ENCODE measurements at regions of chr6 and their contacts with region 1.

Region 1: DNA sequence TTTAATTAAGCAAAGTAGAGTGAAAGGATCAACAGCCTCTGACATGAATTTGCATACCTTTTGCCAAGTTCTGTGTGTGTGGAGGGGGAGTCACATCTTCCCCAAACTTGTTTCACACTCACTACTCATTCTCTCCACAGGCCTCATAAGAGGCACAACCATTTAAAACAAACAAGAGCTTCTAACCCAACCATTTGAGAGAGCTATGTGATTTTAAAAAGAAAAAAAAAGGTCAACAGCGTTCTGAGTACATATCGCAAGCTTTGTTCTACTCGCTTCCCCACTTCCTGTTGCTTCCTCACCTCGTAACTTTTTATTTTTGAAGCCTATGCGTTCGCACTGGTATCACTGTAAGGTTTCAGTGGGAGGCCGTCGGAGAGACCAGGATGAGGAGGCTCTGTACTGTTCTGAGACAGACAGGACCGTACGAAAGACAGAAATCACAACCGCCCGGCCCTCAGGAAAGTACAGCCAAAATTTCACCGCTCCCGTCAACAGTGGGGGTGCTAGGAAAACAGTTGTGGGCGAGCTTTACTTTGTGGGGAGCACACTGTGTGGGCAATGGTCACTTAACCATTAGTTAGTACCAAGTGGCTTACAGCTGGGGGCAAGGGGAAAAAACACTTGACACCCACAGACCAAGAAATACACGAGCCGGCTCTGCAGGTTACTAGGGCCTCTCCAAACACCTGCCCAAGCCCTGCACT is 61.3 kb downstream of the TRERF1 start:
- DNase-seq: peak; percentile 60
- H3K4me3 Mint-ChIP-seq: peak overlapping the region; percentile 78
- H3K27ac Mint-ChIP-seq: peak overlapping the region; percentile 99
- H3K4me1 Mint-ChIP-seq: peaks cover 92% of the 10 kb centered on the region
- H3K27me3 Mint-ChIP-seq: no peaks in the 10 kb centered on the region

Region 2: DNA sequence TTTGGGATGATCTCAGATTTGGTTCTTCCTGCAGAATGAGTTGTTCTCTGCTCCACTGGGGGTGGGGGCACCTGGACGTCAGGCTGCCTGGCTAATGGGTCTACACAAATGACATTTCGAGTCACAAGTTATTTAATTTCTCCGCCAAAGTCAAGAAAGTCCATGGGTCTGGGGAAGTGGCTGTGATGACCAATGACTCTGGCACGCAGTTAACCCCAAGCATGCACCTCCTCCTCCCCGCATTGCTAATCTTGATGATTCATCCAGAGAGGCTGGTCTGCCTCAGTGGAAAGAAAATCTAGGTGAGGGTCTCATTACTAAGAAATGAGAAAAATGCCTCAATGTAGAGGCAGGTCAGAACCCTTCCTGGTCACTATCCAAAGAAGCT is 74.4 kb before region 1 on chr6:
- intact Hi-C with region 1: loop called (anchors 2 kb)
- DNase-seq: no peak
- H3K4me3 Mint-ChIP-seq: no peak overlapping the region
- H3K27ac Mint-ChIP-seq: peak overlapping the region; percentile 80
- H3K4me1 Mint-ChIP-seq: peaks cover 72% of the 10 kb centered on the region
- H3K27me3 Mint-ChIP-seq: no peaks in the 10 kb centered on the region

Region 3: GRCh38 chr6:42352856-42353564 is 37.4 kb before region 1 on chr6:
- intact Hi-C with region 1: loop called (anchors 1 kb)
- DNase-seq: no peak
- H3K4me3 Mint-ChIP-seq: no peak overlapping the region
- H3K27ac Mint-ChIP-seq: no peak overlapping the region
- H3K4me1 Mint-ChIP-seq: peaks cover 31% of the 10 kb centered on the region
- H3K27me3 Mint-ChIP-seq: no peaks in the 10 kb centered on the region

Region 4: DNA sequence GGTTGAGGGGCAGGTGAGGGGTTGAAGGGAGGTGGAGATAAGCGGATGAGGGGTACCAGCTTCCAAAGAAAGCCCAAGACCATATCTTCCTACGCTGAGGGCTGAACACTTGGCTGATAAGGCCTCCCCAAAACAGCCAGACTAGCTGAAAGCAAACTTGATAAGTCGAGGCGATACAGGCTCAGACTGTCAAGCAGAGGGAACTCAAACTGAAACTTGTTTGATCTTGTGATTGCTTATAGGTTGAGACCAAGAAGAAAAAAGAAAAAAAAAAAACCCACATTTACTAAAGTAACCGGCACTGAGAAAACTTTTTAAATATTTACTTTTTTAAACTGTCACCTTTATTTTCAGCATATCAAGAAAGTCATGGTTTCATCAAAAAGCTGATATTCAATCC is 12.3 kb before region 1 on chr6:
- intact Hi-C with region 1: loop called (anchors 1 kb)
- DNase-seq: peak; percentile 38
- H3K4me3 Mint-ChIP-seq: peak overlapping the region; percentile 60
- H3K27ac Mint-ChIP-seq: peak overlapping the region; percentile 71
- H3K4me1 Mint-ChIP-seq: peaks cover 64% of the 10 kb centered on the region
- H3K27me3 Mint-ChIP-seq: no peaks in the 10 kb centered on the region

Region 5: DNA sequence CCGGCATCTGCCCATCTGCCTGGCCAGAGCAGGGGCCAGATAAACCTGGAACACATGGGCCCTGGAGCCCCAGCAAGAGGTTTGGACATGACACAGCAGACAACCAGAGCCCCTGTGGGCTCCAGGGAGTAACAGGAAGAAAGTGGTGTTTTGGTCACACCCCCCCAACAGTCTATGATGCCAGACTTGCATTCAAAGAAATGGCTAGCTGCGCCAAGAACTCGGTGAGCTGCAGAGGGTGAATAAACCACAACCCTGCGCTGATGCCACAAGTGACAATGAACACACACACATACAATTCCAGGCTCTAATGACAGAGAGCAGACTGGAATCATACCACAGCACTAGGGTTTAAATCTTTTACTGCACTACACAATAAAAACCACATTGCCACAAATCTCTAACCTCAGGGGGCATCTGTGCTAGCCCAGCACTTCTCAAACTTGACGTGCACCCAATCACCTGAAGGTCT is 27.3 kb after region 1 on chr6:
- intact Hi-C with region 1: loop called (anchors 1 kb)
- DNase-seq: peak; percentile 48
- H3K4me3 Mint-ChIP-seq: peak overlapping the region; percentile 37
- H3K27ac Mint-ChIP-seq: peak overlapping the region; percentile 56
- H3K4me1 Mint-ChIP-seq: peaks cover 83% of the 10 kb centered on the region
- H3K27me3 Mint-ChIP-seq: no peaks in the 10 kb centered on the region

Region 6: GRCh38 chr6:42434237-42434636 is 43.9 kb after region 1 on chr6:
- intact Hi-C with region 1: loop called (anchors 1 kb)
- DNase-seq: no peak
- H3K4me3 Mint-ChIP-seq: no peak overlapping the region
- H3K27ac Mint-ChIP-seq: no peak overlapping the region
- H3K4me1 Mint-ChIP-seq: peaks cover 17% of the 10 kb centered on the region
- H3K27me3 Mint-ChIP-seq: no peaks in the 10 kb centered on the region

Region 7: DNA sequence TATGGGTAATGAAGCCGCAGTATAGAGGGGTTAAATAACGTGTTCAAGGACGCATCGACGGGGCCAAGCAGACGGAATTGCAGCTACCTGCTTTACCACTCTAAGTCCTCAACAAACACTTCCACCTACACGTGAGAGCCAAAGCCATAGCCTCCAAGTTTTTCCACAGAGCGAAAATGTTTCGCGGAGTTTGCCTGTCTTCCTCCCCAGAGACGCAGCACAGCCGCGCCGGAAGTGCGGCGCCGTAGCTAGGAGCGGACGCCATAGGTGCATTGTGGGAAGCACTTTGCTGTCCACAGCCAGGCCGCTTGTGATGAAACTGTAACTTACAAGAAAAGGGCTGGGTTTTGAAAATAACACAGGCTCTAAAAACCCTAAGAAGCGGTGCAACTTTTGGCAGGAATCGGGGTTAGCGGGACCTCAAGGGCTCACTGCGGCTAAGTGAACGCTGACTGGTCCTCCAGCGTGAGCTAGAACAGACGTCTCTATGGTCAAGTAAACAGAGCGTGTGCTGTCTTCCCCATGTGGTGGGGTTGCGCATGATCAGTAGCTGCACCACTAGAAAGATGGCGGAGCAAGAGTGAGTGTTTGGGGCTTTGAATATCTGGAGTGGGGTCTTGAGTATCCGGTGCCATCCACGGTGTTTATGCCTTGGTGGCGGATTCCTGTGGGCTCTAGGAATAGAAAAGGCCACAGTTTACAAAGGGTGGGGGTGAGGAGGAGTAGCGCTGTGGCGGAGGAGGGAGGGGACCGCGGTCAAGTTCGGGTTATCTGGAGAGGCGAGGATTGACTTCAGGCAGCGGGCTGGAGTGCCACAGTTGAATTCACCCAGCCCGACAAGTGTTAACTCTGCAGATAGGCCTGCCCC is 489.2 kb after region 1 on chr6 and contains the start of gene RPL7L1:
- intact Hi-C with region 1: loop called (anchors 1 kb)
- DNase-seq: peak; percentile 82
- H3K4me3 Mint-ChIP-seq: peak within 1 kb of the TSS; percentile 96
- H3K27ac Mint-ChIP-seq: peak within 1 kb of the TSS; percentile 97
- H3K4me1 Mint-ChIP-seq: peaks cover 30% of the 10 kb centered on the region
- H3K27me3 Mint-ChIP-seq: no peaks in the 10 kb centered on the region
- total RNA-seq, gene RPL7L1: 179 TPM in 2 replicates

Measured in activated T-helper 1 cell treated with anti-CD3 and anti-CD28 coated beads, Interleukin-12 subunit alpha, Interleukin-12 subunit beta, Interleukin-2, Interleukin-4 antibody, amounts not matched to agents 30 ng/mL and 10 ng/mL and 1 ng/mL, durations not matched to agents 14 hours and 24 hours and 36 hours (primary cell).